Dendritic cell treated with granulocyte-macrophage colony-stimulating factor and Interleukin-4, amounts not matched to agents 40 ng/mL and 50 ng/mL, for 4 days (primary cell): ENCODE measurements at regions of chr2 and their contacts with region 1.

Region 1: DNA sequence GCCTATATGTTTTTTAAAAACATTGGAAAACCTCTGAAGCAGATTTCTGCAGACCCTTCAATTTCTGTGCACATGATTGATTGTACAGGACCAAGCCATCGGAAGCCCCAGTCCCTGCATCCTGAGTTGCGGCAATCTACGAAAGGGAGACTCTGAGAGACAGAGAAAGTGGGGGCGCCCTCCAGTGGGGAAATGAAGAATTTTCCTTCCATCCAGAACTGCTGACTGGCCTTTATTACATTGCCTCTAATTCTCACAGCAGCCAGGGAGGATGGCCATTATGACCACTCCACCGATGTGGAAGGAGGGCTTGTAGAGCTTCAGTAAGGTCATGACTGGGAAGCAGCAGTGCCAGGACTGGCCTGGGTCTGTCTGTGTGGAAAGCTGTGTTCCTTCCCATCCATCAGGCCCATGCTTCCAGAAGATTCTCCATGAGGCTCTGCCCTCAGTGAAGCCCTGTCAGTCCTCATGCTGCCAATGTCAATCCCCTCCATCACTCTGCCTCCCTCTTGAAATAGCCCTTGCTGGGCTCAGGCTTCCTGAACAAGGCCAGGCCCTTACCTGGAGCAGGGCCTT is 20.0 kb upstream of the RESP18 start:
- H3K4me3 Mint-ChIP-seq: no peak overlapping the region
- H3K27ac Mint-ChIP-seq: no peak overlapping the region
- H3K4me1 Mint-ChIP-seq: peaks cover 54% of the 10 kb centered on the region
- H3K27me3 Mint-ChIP-seq: peaks cover 30% of the 10 kb centered on the region

Region 2: GRCh38 chr2:219308142-219309093 is 44.1 kb before region 1 on chr2:
- intact Hi-C with region 1: loop called (anchors 5 kb)
- H3K4me3 Mint-ChIP-seq: no peak overlapping the region
- H3K27ac Mint-ChIP-seq: no peak overlapping the region
- H3K4me1 Mint-ChIP-seq: peaks cover 10% of the 10 kb centered on the region
- H3K27me3 Mint-ChIP-seq: peaks cover 66% of the 10 kb centered on the region